ENCODE measurements at regions of chr17 and their contacts with region 1.

Region 1: GRCh38 chr17:16285957-16286640 is 67.2 kb downstream of the CENPV start:
- DNase-seq: peak; percentile 41 to 76 (median 72)
- ATAC-seq: peak; percentile 95
- H3K4me3 ChIP-seq: peak overlapping the region; percentile 53
- H3K4me3 Mint-ChIP-seq: peak overlapping the region; percentile 71 to 85 (median 80)
- H3K27ac ChIP-seq: peak overlapping the region; percentile 81
- H3K27ac Mint-ChIP-seq: peak overlapping the region; percentile 93 to 99 (median 97)
- H3K4me1 ChIP-seq: peaks cover 36 to 50% of the 10 kb centered on the region in 2 donors
- H3K4me1 Mint-ChIP-seq: peaks cover 41 to 68% (median 62%) of the 10 kb centered on the region in 7 donors
- H3K27me3 ChIP-seq: no peaks in the 10 kb centered on the region
- H3K27me3 Mint-ChIP-seq: no peaks in the 10 kb centered on the region

Region 2: GRCh38 chr17:16269658-16270057 is 16.4 kb before region 1 on chr17:
- CTCF ChIA-PET with region 1: no interaction called
- POLR2A ChIA-PET with region 1: no interaction called
- intact Hi-C with region 1: loop called in 1 of 2 experiments (anchors 1 kb)
- DNase-seq: no peak
- ATAC-seq: no peak
- H3K4me3 ChIP-seq: no peak overlapping the region
- H3K4me3 Mint-ChIP-seq: peak overlapping the region in 6 of 10 donors; percentile 15 to 71 (median 38)
- H3K27ac ChIP-seq: no peak overlapping the region
- H3K27ac Mint-ChIP-seq: peak overlapping the region in 6 of 9 donors; percentile 16 to 80 (median 66)
- H3K4me1 ChIP-seq: peaks cover 21 to 27% of the 10 kb centered on the region in 2 donors
- H3K4me1 Mint-ChIP-seq: peaks cover 17 to 42% (median 37%) of the 10 kb centered on the region in 7 donors
- H3K27me3 ChIP-seq: no peaks in the 10 kb centered on the region
- H3K27me3 Mint-ChIP-seq: no peaks in the 10 kb centered on the region

Region 3: DNA sequence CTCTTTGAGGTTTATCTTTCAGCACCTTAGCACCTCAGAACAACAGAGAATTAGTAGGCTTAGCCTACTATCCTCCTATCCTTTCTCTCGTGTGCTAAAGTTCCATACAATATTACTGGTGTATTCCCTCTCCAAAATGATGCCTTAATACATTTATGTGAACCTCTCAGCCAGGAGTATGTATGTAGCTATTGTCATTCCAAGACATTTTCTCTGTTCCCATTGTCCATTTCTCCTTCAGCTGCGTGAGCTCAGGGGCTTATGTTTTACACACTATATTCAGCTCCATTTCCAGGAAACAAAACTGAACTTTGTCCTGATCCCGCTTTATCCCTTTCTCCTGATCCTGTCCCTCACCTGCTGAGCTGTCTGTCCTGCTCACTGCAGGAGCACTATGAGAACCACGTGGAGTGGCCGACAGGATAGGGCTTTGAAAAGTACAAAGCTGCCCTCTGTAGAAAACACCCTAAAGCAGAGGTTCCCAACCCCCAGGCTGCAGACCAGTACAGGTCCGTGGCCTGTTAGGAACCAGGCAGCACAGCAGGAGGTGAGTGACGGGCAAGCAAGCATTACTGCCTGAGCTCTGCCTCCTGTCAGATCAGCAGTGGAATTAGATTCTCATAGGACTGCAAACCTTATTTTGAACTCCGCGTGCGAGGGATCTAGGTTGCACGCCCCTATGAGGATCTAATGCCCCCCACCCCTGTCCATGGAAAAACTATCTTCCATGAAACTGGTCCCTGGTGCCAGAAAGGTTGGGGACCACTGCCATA is 11.5 kb after region 1 on chr17:
- CTCF ChIA-PET with region 1: no interaction called
- POLR2A ChIA-PET with region 1: interaction called, 3 read pairs
- intact Hi-C with region 1: loop called in 1 of 2 experiments (anchors 1 kb)
- DNase-seq: no peak
- ATAC-seq: no peak
- H3K4me3 ChIP-seq: no peak overlapping the region
- H3K4me3 Mint-ChIP-seq: peak overlapping the region in 1 of 10 donors; percentile 32
- H3K27ac ChIP-seq: no peak overlapping the region
- H3K27ac Mint-ChIP-seq: peak overlapping the region in 5 of 9 donors; percentile 14 to 74 (median 50)
- H3K4me1 ChIP-seq: peaks cover 0 to 13% of the 10 kb centered on the region in 2 donors
- H3K4me1 Mint-ChIP-seq: peaks cover 7 to 43% (median 28%) of the 10 kb centered on the region in 7 donors
- H3K27me3 ChIP-seq: no peaks in the 10 kb centered on the region
- H3K27me3 Mint-ChIP-seq: no peaks in the 10 kb centered on the region

Region 4: DNA sequence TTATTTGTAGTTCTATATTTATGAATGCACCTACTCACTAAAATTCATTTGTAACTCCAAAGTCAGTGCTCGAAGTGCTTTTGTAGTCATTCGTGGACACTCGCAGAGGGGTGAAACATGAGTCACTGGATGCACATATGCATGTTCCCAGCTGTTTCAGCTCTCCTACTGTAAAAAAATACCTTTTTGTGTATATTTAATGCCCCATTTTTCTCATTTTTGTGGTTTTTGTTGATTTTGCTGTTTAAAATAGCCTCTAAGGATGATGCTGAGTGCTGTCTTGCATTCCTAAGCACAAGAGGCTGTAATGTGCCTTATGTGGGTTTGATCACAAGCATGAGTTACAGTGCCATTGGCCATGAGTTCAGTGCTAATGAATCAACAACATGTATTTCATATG is 36.5 kb after region 1 on chr17:
- CTCF ChIA-PET with region 1: no interaction called
- POLR2A ChIA-PET with region 1: no interaction called
- intact Hi-C with region 1: no loop called
- DNase-seq: no peak
- ATAC-seq: no peak
- H3K4me3 ChIP-seq: no peak overlapping the region
- H3K4me3 Mint-ChIP-seq: no peak overlapping the region
- H3K27ac ChIP-seq: no peak overlapping the region
- H3K27ac Mint-ChIP-seq: no peak overlapping the region
- H3K4me1 ChIP-seq: no peaks in the 10 kb centered on the region
- H3K4me1 Mint-ChIP-seq: no peaks in the 10 kb centered on the region
- H3K27me3 ChIP-seq: no peaks in the 10 kb centered on the region
- H3K27me3 Mint-ChIP-seq: no peaks in the 10 kb centered on the region

Region 5: DNA sequence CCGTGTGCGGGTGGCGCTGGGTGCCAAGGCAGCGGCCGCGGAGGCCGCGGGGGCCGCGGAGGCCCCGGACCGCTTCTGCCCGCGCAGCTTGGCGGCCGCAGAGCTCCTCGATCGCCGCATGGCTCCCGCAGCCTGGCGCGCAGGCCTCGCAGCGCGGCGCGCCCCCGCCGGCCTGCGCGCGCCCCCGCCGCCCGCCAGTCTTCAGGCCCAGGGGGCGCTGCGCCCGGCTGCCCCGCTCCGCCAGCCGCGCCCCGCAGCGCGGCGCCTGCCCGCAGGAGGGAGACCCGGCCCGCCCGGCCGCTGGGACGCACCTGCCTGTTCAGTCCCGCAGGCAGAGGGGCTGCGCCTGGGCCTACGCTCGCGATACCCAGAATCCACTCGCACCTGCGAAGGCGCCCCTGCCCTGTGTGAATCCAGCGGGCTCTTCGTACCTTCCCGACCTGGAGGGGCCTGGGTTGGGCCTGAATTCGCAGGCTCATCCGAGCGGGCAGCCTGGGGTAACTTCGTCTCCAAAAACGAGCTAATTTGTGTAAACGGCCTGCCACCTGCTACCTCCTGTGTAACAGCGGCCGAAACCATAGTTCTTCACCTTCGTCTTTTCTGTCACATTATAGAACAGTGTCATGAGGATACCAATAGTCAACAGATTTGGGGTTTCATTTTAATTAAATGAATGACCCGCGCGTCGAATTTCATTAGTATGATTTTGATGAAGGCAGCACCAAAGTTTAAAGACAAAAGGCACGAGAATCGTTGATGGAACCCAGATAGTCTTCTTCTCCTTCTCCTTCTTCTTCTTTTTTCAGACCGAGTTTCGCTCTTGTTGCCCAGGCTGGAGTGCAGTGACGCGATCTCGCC is 67.4 kb after region 1 on chr17 and contains the start of gene CENPV:
- CTCF ChIA-PET with region 1: interaction called, 3 read pairs
- POLR2A ChIA-PET with region 1: interaction called, 10 read pairs
- intact Hi-C with region 1: loop called in 1 of 2 experiments (anchors 1 kb)
- DNase-seq: peak; percentile 62 to 76 (median 71)
- ATAC-seq: peak; percentile 96
- H3K4me3 ChIP-seq: peak within 1 kb of the TSS; percentile 78
- H3K4me3 Mint-ChIP-seq: peak within 1 kb of the TSS; percentile 89 to 98 (median 95)
- H3K27ac ChIP-seq: peak within 1 kb of the TSS; percentile 73
- H3K27ac Mint-ChIP-seq: peak within 1 kb of the TSS; percentile 73 to 98 (median 86)
- H3K4me1 ChIP-seq: peaks cover 4 to 5% of the 10 kb centered on the region in 2 donors
- H3K4me1 Mint-ChIP-seq: peaks cover 11 to 23% (median 19%) of the 10 kb centered on the region in 7 donors
- H3K27me3 ChIP-seq: no peaks in the 10 kb centered on the region
- H3K27me3 Mint-ChIP-seq: peaks cover 0 to 27% (median 0%) of the 10 kb centered on the region in 5 donors
- total RNA-seq, gene CENPV: 9.8 to 30.3 (median 21.7) TPM

Region 6: DNA sequence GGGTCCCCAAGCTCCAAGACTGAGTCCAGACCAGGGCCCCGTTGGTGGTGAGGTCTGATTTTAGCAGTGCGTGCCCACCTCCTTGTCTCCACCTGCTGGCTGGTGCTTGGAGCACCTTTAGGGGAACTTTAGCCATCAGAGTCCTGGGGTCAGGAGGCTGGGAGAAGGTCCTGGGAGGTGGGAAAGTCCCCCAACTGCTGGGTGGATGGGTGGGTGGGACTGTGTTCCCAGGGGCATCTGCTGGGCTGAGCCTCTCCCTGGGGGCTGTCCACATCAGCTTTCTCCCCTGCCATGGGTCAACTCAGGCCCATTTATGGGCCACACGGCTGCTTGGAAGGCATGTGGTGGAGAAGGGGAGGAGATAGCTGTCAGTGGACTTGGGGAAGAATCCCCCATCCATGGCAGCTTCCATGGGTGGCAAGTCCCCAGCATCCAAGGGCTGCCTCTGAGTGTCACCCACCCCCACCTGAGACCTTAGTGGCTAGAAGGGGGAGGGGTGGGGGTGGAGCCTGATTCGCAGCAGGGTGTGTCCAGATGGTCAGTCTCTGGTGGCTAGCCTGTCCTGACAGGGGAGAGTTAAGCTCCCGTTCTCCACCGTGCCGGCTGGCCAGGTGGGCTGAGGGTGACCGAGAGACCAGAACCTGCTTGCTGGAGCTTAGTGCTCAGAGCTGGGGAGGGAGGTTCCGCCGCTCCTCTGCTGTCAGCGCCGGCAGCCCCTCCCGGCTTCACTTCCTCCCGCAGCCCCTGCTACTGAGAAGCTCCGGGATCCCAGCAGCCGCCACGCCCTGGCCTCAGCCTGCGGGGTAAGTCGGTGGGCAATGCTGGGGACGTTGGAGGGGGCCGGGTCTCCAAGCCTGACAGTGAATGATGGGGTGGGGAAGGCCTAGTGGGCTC is 129.2 kb after region 1 on chr17 and contains the start of gene TRPV2:
- CTCF ChIA-PET with region 1: interaction called, 3 read pairs
- POLR2A ChIA-PET with region 1: no interaction called
- intact Hi-C with region 1: loop called (anchors 5 to 10 kb)
- DNase-seq: peak in 8 of 9 donors; percentile 36 to 58 (median 47)
- ATAC-seq: peak; percentile 57
- H3K4me3 ChIP-seq: peak within 1 kb of the TSS; percentile 93
- H3K4me3 Mint-ChIP-seq: peak within 1 kb of the TSS; percentile 90 to 100 (median 98)
- H3K27ac ChIP-seq: peak within 1 kb of the TSS; percentile 94
- H3K27ac Mint-ChIP-seq: peak within 1 kb of the TSS; percentile 96 to 100 (median 98)
- H3K4me1 ChIP-seq: peaks cover 37 to 47% of the 10 kb centered on the region in 2 donors
- H3K4me1 Mint-ChIP-seq: peaks cover 33 to 55% (median 42%) of the 10 kb centered on the region in 7 donors
- H3K27me3 ChIP-seq: no peaks in the 10 kb centered on the region
- H3K27me3 Mint-ChIP-seq: no peaks in the 10 kb centered on the region
- total RNA-seq, gene TRPV2: 66.8 to 141 (median 80.0) TPM

Region 7: GRCh38 chr17:16449121-16449570 is 163.0 kb after region 1 on chr17:
- CTCF ChIA-PET with region 1: no interaction called
- POLR2A ChIA-PET with region 1: no interaction called
- intact Hi-C with region 1: no loop called
- DNase-seq: no peak
- ATAC-seq: no peak
- H3K4me3 ChIP-seq: no peak overlapping the region
- H3K4me3 Mint-ChIP-seq: no peak overlapping the region
- H3K27ac ChIP-seq: no peak overlapping the region
- H3K27ac Mint-ChIP-seq: no peak overlapping the region
- H3K4me1 ChIP-seq: no peaks in the 10 kb centered on the region
- H3K4me1 Mint-ChIP-seq: peaks cover 0 to 16% (median 10%) of the 10 kb centered on the region in 7 donors
- H3K27me3 ChIP-seq: no peaks in the 10 kb centered on the region
- H3K27me3 Mint-ChIP-seq: no peaks in the 10 kb centered on the region

Measured in naive thymus-derived CD4-positive, alpha-beta T cell (primary cell).